Esophagus muscularis mucosa (tissue), 4 donors: ENCODE measurements at regions of chr10 and their contacts with region 1.

Region 1: GRCh38 chr10:58701405-58702135 is 188.9 kb downstream of the BICC1 start:
- DNase-seq: no peak
- H3K4me3 ChIP-seq: no peak overlapping the region
- H3K27ac ChIP-seq: peak overlapping the region; percentile 34 to 67 (median 48)
- H3K4me1 ChIP-seq: peaks cover 0 to 79% (median 57%) of the 10 kb centered on the region in 4 donors
- H3K27me3 ChIP-seq: peaks cover 0 to 3% (median 0%) of the 10 kb centered on the region in 4 donors
- CTCF ChIP-seq: no peak
- EP300 ChIP-seq: no peak
- POLR2A ChIP-seq: no peak

Region 2: GRCh38 chr10:58554316-58554715 is 147.3 kb before region 1 on chr10:
- intact Hi-C with region 1: no loop called
- DNase-seq: no peak
- H3K4me3 ChIP-seq: no peak overlapping the region
- H3K27ac ChIP-seq: no peak overlapping the region
- H3K4me1 ChIP-seq: no peaks in the 10 kb centered on the region
- H3K27me3 ChIP-seq: no peaks in the 10 kb centered on the region
- CTCF ChIP-seq: no peak
- EP300 ChIP-seq: no peak
- POLR2A ChIP-seq: no peak

Region 3: DNA sequence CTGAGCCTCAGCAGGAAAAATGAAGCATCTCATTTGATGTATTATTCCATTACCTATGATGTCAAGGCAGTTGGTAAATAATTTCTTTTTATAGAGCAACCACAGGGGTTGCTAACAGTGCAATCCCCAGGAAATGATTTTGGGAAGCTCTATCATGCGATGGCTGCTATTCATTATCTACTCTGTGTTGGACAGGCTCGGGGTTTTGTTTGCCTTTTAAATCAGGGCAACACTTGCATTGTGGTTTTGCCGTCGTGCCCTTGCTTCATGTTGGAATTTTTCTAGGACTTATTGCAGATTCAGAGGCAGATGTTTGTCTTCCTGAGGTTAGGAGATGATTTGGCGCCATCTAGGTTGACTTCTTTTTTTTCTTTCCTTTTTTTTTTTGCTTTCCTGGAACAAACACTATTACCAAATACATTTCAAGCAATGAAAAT is 60.5 kb before region 1 on chr10:
- intact Hi-C with region 1: loop called (anchors 10 kb)
- DNase-seq: no peak
- H3K4me3 ChIP-seq: no peak overlapping the region
- H3K27ac ChIP-seq: peak overlapping the region; percentile 54 to 75 (median 62)
- H3K4me1 ChIP-seq: peaks cover 4 to 64% (median 57%) of the 10 kb centered on the region in 4 donors
- H3K27me3 ChIP-seq: no peaks in the 10 kb centered on the region
- CTCF ChIP-seq: peak in 1 of 3 experiments; percentile 12
- EP300 ChIP-seq: no peak
- POLR2A ChIP-seq: no peak

Region 4: DNA sequence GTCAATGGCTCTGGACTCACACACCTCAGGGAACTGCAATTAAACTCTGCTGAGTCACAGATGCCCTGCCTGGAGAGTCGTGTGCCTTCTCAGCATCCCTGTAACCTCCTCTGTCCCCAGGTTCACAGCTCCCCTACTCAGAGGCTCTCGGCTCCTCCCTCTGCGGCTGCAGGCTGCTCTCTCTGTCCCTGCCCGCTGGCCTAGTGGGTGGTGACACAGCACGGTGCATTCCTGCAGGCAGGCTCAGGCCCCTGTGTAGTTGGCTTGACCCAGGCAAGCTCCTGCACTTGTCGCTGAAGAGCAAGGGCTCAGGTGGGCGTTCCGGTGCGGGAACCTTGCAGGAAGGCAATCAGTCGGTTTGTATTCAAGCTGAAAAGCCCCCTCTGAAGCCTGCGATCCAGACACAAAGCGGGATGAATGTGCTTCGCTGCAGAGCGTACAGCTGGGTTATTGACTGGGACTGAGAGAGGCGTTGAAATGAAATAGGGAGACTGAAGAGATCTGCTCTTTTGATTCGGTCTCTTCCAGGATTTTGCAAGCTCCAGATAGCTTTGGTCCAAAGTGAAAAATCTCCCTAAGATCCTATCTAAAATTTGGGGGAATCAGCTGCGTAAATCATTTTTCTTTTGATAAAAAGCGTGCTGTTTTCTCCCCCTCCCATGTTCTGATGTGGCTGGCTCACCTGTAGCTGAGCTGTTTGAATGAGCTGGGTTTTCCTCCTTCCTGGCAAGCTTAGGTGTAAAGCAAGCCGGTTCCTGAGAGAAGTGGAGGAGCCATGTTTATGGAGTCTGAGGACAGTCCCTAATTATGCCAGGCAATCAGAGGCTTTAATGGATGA is 266.2 kb after region 1 on chr10:
- intact Hi-C with region 1: no loop called
- DNase-seq: no peak
- H3K4me3 ChIP-seq: no peak overlapping the region
- H3K27ac ChIP-seq: no peak overlapping the region
- H3K4me1 ChIP-seq: peaks cover 0 to 7% (median 2%) of the 10 kb centered on the region in 4 donors
- H3K27me3 ChIP-seq: peaks cover 0 to 5% (median 0%) of the 10 kb centered on the region in 4 donors
- CTCF ChIP-seq: no peak
- EP300 ChIP-seq: no peak
- POLR2A ChIP-seq: no peak

Region 5: DNA sequence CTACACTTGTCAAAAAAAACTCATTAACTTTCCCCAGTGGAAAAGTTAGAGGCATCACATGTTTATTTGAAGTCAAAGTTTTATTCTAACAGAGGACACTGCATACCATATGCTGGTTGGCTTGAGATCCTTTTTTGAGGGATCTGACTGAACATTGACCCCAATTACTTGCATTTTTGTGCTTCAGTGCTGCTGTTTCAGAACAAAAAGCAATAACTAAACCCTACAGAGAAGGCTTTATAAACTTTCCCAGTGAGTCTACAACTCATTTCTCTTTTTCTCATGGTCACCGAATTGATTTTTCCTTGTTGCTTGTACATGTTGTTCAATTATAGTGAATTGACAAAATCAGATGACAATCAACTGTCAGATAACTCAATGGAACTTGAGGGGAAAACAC is 405.6 kb after region 1 on chr10:
- intact Hi-C with region 1: no loop called
- DNase-seq: no peak
- H3K4me3 ChIP-seq: no peak overlapping the region
- H3K27ac ChIP-seq: no peak overlapping the region
- H3K4me1 ChIP-seq: peaks cover 0 to 14% (median 3%) of the 10 kb centered on the region in 4 donors
- H3K27me3 ChIP-seq: no peaks in the 10 kb centered on the region
- CTCF ChIP-seq: no peak
- EP300 ChIP-seq: no peak
- POLR2A ChIP-seq: no peak